Calu3 (cell line): ENCODE measurements at regions of chr6 and their contacts with region 1.

Region 1: DNA sequence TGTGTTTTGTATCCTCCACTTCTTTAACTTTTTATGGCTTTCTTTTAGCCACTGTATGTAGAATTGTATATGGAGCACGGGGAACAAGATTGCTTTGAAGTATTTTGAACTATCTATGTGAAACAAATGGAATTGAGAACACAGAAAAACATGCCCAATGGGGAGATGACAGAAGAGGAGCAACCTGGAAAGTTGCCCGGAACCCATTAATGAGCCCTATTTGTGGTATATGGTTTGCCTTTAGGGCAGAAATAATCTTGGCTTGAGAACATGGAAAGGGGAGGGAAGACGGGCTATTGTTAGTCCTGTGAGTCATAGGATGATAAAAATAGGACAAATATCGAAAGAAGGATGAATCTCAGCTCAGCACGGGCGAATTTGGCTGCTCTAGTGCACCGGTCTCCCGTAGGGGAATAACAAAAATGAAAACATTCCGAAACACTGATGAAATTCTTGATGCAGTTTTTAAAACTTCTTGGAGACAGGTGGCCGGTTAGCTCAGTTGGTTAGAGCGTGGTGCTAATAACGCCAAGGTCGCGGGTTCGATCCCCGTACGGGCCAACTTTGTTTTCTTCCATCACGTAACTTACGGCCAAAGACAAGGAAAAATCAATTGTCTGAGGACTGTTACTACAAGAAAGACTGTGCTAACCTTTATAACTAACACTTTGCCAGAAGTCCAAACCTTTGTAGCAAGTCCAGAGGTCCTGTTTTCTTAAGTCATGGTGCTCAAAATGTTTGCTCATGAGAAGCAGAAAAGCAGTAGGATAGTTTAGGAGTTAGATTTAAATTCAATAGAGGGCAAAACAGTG is 15.7 kb downstream of the HMGN4 start:
- DNase-seq: peak; percentile 89
- H3K4me3 Mint-ChIP-seq: no peak overlapping the region
- H3K27ac Mint-ChIP-seq: no peak overlapping the region
- H3K4me1 Mint-ChIP-seq: peaks cover 33% of the 10 kb centered on the region
- H3K27me3 Mint-ChIP-seq: no peaks in the 10 kb centered on the region
- CTCF ChIP-seq: no peak

Region 2: GRCh38 chr6:26537846-26538571 is 15.8 kb before region 1 on chr6 and contains the start of gene HMGN4:
- CTCF ChIA-PET with region 1: interaction called, 6 read pairs
- intact Hi-C with region 1: loop called (anchors 1 kb)
- DNase-seq: peak; percentile 85
- H3K4me3 Mint-ChIP-seq: peak within 1 kb of the TSS; percentile 94
- H3K27ac Mint-ChIP-seq: peak within 1 kb of the TSS; percentile 95
- H3K4me1 Mint-ChIP-seq: peaks cover 34% of the 10 kb centered on the region
- H3K27me3 Mint-ChIP-seq: no peaks in the 10 kb centered on the region
- CTCF ChIP-seq: no peak
- total RNA-seq, gene HMGN4: 49.7 and 60.0 TPM in 2 replicates

Region 3: GRCh38 chr6:26568601-26569432 is 15.0 kb after region 1 on chr6:
- CTCF ChIA-PET with region 1: interaction called, 8 read pairs
- intact Hi-C with region 1: loop called (anchors 2 kb)
- DNase-seq: peak; percentile 96
- H3K4me3 Mint-ChIP-seq: peak overlapping the region; percentile 88
- H3K27ac Mint-ChIP-seq: peak overlapping the region; percentile 100
- H3K4me1 Mint-ChIP-seq: peaks cover 28% of the 10 kb centered on the region
- H3K27me3 Mint-ChIP-seq: peaks cover 13% of the 10 kb centered on the region
- CTCF ChIP-seq: no peak